GM18951 (cell line): ENCODE measurements at regions of chr9 and their contacts with region 1.

Region 1: GRCh38 chr9:88781628-88782391 is 209.5 kb upstream of the S1PR3 start:
- POLR2A ChIP-seq: no peak

Region 2: GRCh38 chr9:88722753-88723152 is 59.1 kb before region 1 on chr9:
- in situ Hi-C with region 1: no loop called
- POLR2A ChIP-seq: no peak

Region 3: DNA sequence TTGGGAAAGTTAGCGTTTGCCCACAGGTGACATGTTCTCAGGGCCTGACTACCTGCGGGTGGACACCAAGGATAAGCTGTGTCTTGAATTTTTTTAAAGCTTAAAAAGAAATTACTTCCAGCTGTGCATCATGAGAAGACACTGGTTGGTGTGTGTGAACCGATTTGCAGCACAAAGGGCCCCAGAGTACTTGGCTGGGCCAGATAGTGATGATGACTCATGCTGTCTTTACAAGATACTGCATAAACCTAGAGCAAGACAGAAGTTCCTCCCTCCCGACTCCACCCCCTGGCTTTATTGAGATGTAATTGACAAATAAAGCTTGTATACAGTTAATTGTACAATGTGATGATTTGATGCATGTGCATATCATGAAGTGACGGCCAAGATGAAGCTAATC is 34.0 kb before region 1 on chr9:
- in situ Hi-C with region 1: no loop called
- POLR2A ChIP-seq: no peak

Region 4: GRCh38 chr9:88829276-88829675 is 47.5 kb after region 1 on chr9:
- in situ Hi-C with region 1: loop called (anchors 5 kb)
- POLR2A ChIP-seq: no peak